ENCODE measurements at regions of chr4 and their contacts with region 1.

Region 1: DNA sequence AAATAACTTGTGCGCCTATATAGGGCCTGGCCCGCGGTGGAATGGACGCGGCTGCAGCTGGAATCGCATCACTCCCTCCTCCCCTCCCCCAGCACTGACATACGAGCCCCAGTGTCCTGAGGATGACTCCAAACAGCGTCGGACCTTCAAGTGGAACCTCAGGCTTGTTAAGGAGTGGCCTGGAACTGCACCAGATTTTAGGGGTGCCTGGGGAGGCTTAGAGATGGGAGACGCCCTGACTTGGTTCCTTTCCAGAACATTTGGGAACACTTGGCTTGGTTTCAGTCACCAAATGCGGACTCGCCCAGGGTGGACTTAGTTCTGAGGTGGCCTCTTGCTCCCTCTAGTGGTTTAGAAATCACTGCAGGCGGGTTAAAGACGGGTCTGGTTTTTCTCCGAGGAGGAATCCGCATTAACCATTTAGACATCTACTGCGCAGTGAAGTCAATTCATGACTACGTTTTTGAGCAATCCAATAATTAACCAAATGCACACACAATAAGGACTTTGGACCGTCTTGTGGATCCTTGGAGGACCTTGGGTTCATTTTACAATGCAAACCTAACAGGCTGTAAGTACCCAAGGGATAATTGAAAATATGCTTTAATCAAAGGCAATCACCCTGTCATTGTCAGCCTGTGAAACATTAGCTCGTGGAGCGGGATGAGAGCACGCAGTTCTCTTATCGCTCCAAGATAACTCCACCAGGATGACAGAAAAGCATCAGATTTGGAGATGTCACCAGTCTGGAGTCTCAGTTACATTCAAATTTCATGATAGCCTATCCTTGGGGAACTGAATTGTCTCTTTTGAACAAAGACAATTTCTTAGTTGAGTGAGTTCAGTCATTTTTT is 11.2 kb upstream of the PDGFRA start:
- DNase-seq: peak; percentile 76
- CTCF ChIP-seq: peak; percentile 66

Region 2: DNA sequence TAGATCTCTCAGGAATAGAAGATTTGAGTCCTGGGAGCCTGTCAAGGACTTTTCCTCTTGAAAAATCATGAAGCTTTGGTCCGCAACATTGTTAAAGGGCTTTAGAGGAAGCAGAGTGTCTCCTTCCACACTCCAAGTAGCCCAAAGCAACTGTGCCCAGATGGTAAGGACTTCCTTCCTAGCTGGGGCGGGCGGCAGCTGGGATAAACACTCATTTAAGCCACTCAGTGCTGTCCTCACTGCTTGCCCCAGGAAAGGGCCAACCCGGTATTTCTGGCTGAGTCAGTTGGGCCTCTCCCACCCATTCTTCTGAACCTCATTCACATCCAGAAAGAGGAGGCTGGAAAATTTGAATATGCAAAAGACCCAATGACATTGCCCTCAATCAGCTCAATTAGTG is 297.8 kb before region 1 on chr4:
- CTCF ChIA-PET with region 1: interaction called, 13 read pairs
- POLR2A ChIA-PET with region 1: no interaction called
- DNase-seq: no peak
- CTCF ChIP-seq: no peak

Measured in GM10248 (cell line).